ENCODE measurements at regions of chr1 and their contacts with region 1.

Region 1: DNA sequence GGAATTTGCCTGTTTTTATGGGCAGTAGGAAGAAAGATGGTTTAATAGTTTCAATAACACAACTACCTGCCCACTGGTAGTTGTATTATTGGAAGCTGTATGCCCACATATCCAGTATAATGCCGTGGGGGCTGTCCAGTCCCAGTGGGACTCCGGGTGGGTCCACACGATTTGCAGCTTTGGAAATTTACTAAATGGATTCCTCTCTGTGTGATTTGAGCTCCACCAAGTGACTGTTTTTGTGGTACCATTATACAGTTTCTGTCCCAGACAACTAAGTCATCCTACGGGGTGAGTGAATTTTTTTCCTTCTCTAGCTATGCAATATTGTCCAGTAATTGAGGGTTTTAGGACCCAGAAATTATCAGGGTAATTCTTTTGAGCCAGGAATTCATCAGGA is 86.8 kb downstream of the PLA2G4A start:
- DNase-seq: peak; percentile 20
- H3K4me3 ChIP-seq: no peak overlapping the region
- H3K27ac ChIP-seq: no peak overlapping the region
- H3K4me1 ChIP-seq: peaks cover 20% of the 10 kb centered on the region
- H3K27me3 ChIP-seq: no peaks in the 10 kb centered on the region
- CTCF ChIP-seq: no peak
- POLR2A ChIP-seq: no peak

Region 2: GRCh38 chr1:186375088-186375953 is 540.2 kb before region 1 on chr1 and contains the starts of genes ODR4 and TPR:
- CTCF ChIA-PET with region 1: interaction called, 15 read pairs
- POLR2A ChIA-PET with region 1: no interaction called
- dilution Hi-C with region 1: no loop called
- intact Hi-C with region 1: loop called (anchors 2 kb)
- DNase-seq: peak; percentile 99
- H3K4me3 ChIP-seq: peak within 1 kb of the TSS; percentile 65 to 91 (median 68)
- H3K27ac ChIP-seq: peak within 1 kb of the TSS; percentile 63
- H3K4me1 ChIP-seq: peaks cover 18% of the 10 kb centered on the region
- H3K27me3 ChIP-seq: no peaks in the 10 kb centered on the region
- CTCF ChIP-seq: peak; percentile 90 to 98
- POLR2A ChIP-seq: peak; percentile 83
- total RNA-seq, gene ODR4: 17.3 and 18.6 TPM in 2 replicates
- total RNA-seq, gene TPR: 107 and 118 TPM in 2 replicates

Region 3: GRCh38 chr1:186722711-186723309 is 192.7 kb before region 1 on chr1:
- CTCF ChIA-PET with region 1: interaction called, 8 read pairs
- POLR2A ChIA-PET with region 1: no interaction called
- dilution Hi-C with region 1: no loop called
- intact Hi-C with region 1: loop called (anchors 1 kb)
- DNase-seq: peak; percentile 52
- H3K4me3 ChIP-seq: no peak overlapping the region
- H3K27ac ChIP-seq: no peak overlapping the region
- H3K4me1 ChIP-seq: no peaks in the 10 kb centered on the region
- H3K27me3 ChIP-seq: no peaks in the 10 kb centered on the region
- CTCF ChIP-seq: peak; percentile 55 to 56
- POLR2A ChIP-seq: no peak

Region 4: GRCh38 chr1:186943891-186944686 is 28.5 kb after region 1 on chr1:
- CTCF ChIA-PET with region 1: interaction called, 5 read pairs
- POLR2A ChIA-PET with region 1: no interaction called
- dilution Hi-C with region 1: no loop called
- intact Hi-C with region 1: loop called (anchors 1 kb)
- DNase-seq: peak; percentile 94
- H3K4me3 ChIP-seq: no peak overlapping the region
- H3K27ac ChIP-seq: peak overlapping the region; percentile 99
- H3K4me1 ChIP-seq: peaks cover 59% of the 10 kb centered on the region
- H3K27me3 ChIP-seq: no peaks in the 10 kb centered on the region
- CTCF ChIP-seq: no peak
- POLR2A ChIP-seq: peak; percentile 67

Region 5: DNA sequence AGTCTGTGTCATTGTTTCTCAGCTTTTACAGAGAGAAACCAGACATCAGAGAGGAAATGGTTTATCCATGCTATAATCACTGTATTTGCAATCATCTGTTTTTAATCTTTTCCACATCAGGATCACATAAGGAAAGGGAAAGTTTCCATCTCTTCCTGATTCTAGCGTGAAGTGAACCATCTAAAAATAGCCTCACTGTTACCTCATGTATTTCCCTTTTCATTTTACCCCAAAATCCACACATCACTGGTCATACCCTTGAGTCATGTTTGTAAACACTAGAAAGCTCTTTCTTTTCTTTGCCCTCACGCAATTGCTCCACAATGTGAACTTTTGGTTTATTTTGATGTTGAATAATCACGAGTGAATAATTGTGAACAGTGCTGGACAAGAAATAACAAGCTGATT is 59.2 kb after region 1 on chr1:
- CTCF ChIA-PET with region 1: interaction called, 41 read pairs
- POLR2A ChIA-PET with region 1: no interaction called
- dilution Hi-C with region 1: no loop called
- intact Hi-C with region 1: loop called (anchors 1 kb)
- DNase-seq: peak; percentile 98
- H3K4me3 ChIP-seq: peak overlapping the region in 1 of 3 experiments; percentile 12
- H3K27ac ChIP-seq: peak overlapping the region; percentile 93
- H3K4me1 ChIP-seq: peaks cover 49% of the 10 kb centered on the region
- H3K27me3 ChIP-seq: no peaks in the 10 kb centered on the region
- CTCF ChIP-seq: no peak
- POLR2A ChIP-seq: peak; percentile 28